Vagina (tissue), 2 donors: ENCODE measurements at regions of chr3 and their contacts with region 1.

Region 1: DNA sequence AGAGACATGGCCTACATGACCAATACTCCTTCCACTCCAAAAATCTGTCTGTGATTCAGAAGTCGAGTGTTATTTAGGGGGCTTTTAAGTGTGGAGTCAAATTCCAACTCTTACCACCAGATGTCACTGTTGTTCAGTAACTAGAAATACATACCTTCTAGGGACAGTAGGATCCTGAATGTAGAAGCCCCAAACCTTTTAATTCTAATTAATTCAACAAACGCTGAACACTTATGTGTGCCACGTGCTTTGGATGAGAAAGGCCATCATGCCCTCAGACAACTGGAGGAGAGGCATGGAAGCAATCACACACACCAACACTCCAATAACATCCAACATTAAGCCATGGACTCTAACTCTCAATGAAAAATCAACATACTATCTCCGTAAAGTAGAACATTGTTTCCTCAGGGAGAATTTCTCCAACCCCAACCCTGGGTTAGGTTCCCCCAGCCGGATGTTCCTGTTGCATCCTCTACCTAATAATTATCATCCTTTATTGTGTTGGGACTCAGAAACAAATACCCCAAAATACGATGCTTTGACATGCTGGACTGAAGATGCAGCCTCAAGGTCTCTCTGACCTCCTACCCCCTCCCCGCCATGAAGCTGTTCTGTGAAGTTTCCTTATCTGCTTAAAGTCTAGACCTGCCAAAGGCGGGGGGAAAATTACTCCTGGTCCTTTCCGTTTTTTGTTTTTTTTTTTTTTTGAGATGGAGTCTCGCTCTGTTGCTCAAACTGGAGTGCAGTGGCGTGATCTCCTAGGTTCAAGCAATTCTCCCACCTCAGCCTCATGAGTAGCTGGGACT is 8.0 kb upstream of the CCDC13 start:
- DNase-seq: no peak
- H3K4me3 ChIP-seq: no peak overlapping the region
- H3K27ac ChIP-seq: peak overlapping the region; percentile 66
- H3K4me1 ChIP-seq: peaks cover 15% of the 10 kb centered on the region
- H3K27me3 ChIP-seq: no peaks in the 10 kb centered on the region
- CTCF ChIP-seq: peak; percentile 75 to 96 (median 95)
- POLR2A ChIP-seq: no peak

Region 2: GRCh38 chr3:42839616-42840015 is 58.5 kb after region 1 on chr3:
- intact Hi-C with region 1: loop called (anchors 10 kb)
- DNase-seq: no peak
- H3K4me3 ChIP-seq: peak overlapping the region in 1 of 2 donors; percentile 10
- H3K27ac ChIP-seq: no peak overlapping the region
- H3K4me1 ChIP-seq: no peaks in the 10 kb centered on the region
- H3K27me3 ChIP-seq: no peaks in the 10 kb centered on the region
- CTCF ChIP-seq: peak; percentile 27 to 84 (median 48)
- POLR2A ChIP-seq: no peak

Region 3: GRCh38 chr3:42880601-42881451 is 99.7 kb after region 1 on chr3:
- intact Hi-C with region 1: loop called (anchors 5 kb)
- DNase-seq: no peak
- H3K4me3 ChIP-seq: peak overlapping the region; percentile 59 to 63
- H3K27ac ChIP-seq: peak overlapping the region; percentile 78
- H3K4me1 ChIP-seq: peaks cover 10% of the 10 kb centered on the region
- H3K27me3 ChIP-seq: no peaks in the 10 kb centered on the region
- CTCF ChIP-seq: peak; percentile 91 to 97 (median 94)
- POLR2A ChIP-seq: no peak